Adrenal gland (tissue), 19 donors: ENCODE measurements at regions of chr2 and their contacts with region 1.

Region 1: GRCh38 chr2:144390424-144391020 is 129.4 kb downstream of the ZEB2 start:
- DNase-seq: no peak
- H3K4me3 ChIP-seq: no peak overlapping the region
- H3K27ac ChIP-seq: peak overlapping the region in 2 of 5 donors; percentile 4 to 9
- H3K4me1 ChIP-seq: no peaks in the 10 kb centered on the region
- H3K27me3 ChIP-seq: no peaks in the 10 kb centered on the region
- CTCF ChIP-seq: no peak
- POLR2A ChIP-seq: no peak

Region 2: DNA sequence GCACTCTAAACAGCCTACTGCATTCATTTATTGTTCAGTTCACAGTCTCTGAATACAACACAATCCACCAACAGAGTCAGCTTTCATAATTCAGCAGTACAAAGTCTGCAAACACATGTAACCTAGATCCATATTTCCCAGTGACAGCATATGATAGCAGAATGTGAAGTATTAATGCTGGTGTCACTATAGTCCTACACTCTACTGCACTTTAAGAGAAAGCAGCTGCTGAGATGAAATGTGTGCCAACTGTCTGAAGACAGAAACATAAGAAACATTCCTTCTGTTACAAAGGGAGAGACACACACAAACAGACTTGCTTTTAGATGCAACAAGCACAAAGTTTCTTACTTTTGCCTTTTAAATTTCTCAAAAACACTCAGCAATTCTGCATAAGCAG is 312.4 kb before region 1 on chr2:
- intact Hi-C with region 1: no loop called
- DNase-seq: no peak
- H3K4me3 ChIP-seq: no peak overlapping the region
- H3K27ac ChIP-seq: no peak overlapping the region
- H3K4me1 ChIP-seq: no peaks in the 10 kb centered on the region
- H3K27me3 ChIP-seq: no peaks in the 10 kb centered on the region
- CTCF ChIP-seq: no peak
- POLR2A ChIP-seq: no peak

Region 3: GRCh38 chr2:144332356-144333142 is 58.0 kb before region 1 on chr2:
- intact Hi-C with region 1: loop called in 1 of 2 experiments (anchors 10 kb)
- DNase-seq: peak; percentile 85 to 93 (median 90)
- H3K4me3 ChIP-seq: peak overlapping the region in 2 of 4 donors; percentile 38 to 65
- H3K27ac ChIP-seq: peak overlapping the region; percentile 73 to 98 (median 92)
- H3K4me1 ChIP-seq: peaks cover 0 to 10% of the 10 kb centered on the region in 2 donors
- H3K27me3 ChIP-seq: no peaks in the 10 kb centered on the region
- CTCF ChIP-seq: no peak
- POLR2A ChIP-seq: peak; percentile 45 to 83